Ovary (tissue), 10 donors: ENCODE measurements at regions of chr15 and their contacts with region 1.

Region 1: DNA sequence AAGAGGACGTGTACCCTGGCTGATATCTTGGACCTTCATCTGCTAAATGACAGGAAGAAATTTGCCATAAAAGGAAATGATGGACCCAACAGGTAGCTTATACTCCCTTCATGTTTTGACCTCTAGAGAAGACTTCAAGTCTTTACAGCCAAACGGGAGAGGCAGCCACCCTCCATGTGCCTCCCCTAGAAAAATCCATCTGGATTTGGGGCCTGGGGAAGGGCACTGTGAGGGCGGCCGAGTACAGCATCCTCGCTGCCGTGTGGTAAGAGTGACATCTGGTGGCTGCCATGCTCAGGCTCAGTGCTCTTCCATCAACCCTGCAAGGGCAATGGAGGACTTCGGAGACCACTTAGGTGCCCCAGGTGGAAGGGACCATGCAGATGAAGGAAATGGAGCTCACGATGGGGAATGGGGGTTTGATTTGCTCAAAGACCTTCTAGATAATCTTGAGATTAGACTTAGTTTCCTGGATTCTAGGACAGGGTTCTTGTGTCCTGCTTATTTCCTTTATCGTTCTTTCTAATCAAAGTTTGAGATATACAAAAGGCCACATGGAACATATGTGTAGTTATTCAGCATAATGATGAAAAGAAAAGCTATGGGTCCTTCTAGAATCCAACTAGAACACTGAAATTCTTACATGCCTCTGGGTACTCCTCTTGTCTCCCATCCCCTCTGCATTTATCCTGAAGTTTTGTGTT is 44.4 kb downstream of the AQP9 start:
- DNase-seq: peak in 4 of 5 donors; percentile 13 to 52 (median 34)
- H3K4me3 ChIP-seq: no peak overlapping the region
- H3K27ac ChIP-seq: no peak overlapping the region
- H3K4me1 ChIP-seq: no peaks in the 10 kb centered on the region
- H3K27me3 ChIP-seq: no peaks in the 10 kb centered on the region
- CTCF ChIP-seq: peak in 1 of 3 donors; percentile 13
- EP300 ChIP-seq: no peak
- POLR2A ChIP-seq: no peak

Region 2: GRCh38 chr15:58115692-58116091 is 66.9 kb before region 1 on chr15:
- intact Hi-C with region 1: loop called in 1 of 4 experiments (anchors 10 kb)
- DNase-seq: no peak
- H3K4me3 ChIP-seq: no peak overlapping the region
- H3K27ac ChIP-seq: no peak overlapping the region
- H3K4me1 ChIP-seq: no peaks in the 10 kb centered on the region
- H3K27me3 ChIP-seq: no peaks in the 10 kb centered on the region
- CTCF ChIP-seq: no peak
- EP300 ChIP-seq: no peak
- POLR2A ChIP-seq: no peak

Region 3: GRCh38 chr15:58146749-58147148 is 35.9 kb before region 1 on chr15:
- intact Hi-C with region 1: loop called in 1 of 4 experiments (anchors 2 kb)
- DNase-seq: no peak
- H3K4me3 ChIP-seq: no peak overlapping the region
- H3K27ac ChIP-seq: no peak overlapping the region
- H3K4me1 ChIP-seq: peaks cover 2% of the 10 kb centered on the region
- H3K27me3 ChIP-seq: no peaks in the 10 kb centered on the region
- CTCF ChIP-seq: no peak
- EP300 ChIP-seq: no peak
- POLR2A ChIP-seq: no peak